ENCODE measurements at regions of chr11 and their contacts with region 1.

Region 1: GRCh38 chr11:61061081-61061826 is 41.0 kb upstream of the CD5 start:
- DNase-seq: peak; percentile 97
- H3K4me3 Mint-ChIP-seq: peak overlapping the region; percentile 70
- H3K27ac Mint-ChIP-seq: peak overlapping the region; percentile 100
- H3K4me1 Mint-ChIP-seq: peaks cover 88% of the 10 kb centered on the region
- H3K27me3 Mint-ChIP-seq: no peaks in the 10 kb centered on the region

Region 2: DNA sequence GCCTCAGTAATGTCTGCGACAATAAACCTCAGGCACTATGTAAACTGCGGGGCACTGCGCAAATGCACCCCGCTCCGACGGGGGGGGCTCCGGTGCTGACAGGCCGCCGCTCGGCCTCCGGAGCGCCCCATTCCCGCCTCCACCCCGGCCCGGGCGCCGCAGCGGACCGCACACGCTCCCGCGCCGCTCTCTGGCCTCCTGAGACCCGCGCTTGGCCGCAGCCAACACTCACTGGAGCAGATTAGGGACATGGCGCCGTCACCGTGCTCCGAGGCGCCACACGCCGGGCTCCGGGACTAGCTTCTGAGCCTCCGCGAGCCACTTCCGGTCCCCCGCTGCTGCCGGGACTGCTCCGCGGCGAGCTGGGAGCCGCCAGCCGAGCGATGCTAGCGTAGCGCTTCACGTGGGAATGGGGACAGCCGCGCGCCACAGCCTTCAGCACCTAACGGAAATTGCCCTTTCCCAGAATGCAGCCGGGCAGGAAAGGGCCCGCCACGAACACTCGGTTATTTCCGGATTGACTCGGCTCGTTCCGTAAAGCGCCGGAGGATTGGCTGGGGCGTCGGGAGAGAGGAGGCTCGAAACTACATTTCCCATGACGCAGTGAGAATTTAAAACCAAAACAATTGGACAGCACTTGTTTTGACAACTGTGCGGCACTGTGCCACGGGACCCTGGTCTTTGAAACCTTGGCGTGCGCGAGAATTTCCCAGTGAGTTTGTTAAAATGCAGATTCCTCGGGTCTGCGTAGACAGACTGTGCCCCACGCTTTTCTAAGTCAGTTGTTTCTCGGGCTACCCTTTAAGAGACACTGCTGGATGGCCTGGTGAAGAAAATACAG is 154.9 kb before region 1 on chr11 and contains the start of gene PRPF19:
- CTCF ChIA-PET with region 1: no interaction called
- intact Hi-C with region 1: loop called (anchors 1 kb)
- DNase-seq: peak; percentile 100
- H3K4me3 Mint-ChIP-seq: peak within 1 kb of the TSS; percentile 80
- H3K27ac Mint-ChIP-seq: peak within 1 kb of the TSS; percentile 92
- H3K4me1 Mint-ChIP-seq: peaks cover 40% of the 10 kb centered on the region
- H3K27me3 Mint-ChIP-seq: no peaks in the 10 kb centered on the region
- total RNA-seq, gene PRPF19: 108 to 119 TPM

Region 3: DNA sequence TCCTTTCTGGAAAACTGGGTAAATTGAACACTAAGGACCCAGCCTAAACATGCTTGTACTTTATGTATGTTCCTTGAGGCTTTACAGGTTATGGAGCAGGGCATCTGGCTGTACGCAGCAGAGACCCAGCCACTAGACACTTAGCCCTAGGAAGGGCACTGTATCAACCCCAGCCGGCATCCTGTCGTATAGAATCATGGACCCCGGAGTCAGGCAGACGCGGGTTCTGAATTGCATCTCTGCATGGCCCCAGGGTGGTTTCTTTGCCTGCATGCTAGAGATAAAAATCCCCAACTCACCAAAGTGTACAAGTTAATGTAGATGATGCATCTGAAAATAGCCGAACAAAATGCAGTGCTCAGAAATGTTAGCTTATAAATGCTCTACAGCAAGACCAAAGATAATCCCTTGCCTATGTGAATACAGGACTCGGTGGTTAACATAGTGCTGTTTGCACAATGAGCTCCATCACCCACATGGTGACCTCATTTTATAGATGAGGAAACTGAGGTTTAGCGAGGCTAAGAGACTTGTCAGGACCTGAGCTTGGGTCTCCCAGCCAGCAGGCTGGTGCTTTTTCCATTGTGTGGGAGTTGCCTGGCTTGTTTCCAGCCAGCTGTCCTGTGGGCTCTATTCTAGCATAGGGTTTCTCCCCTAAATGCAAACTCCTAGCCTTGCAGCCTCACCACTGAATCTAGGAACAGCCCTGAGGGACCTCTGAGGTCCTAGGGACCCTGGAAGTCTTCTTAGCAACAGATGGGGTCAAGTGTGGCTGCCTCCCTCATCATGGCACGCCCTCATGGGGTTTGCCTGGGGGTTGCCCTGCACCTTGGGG is 82.5 kb before region 1 on chr11:
- CTCF ChIA-PET with region 1: no interaction called
- intact Hi-C with region 1: loop called (anchors 2 kb)
- DNase-seq: peak; percentile 92
- H3K4me3 Mint-ChIP-seq: peak overlapping the region; percentile 72
- H3K27ac Mint-ChIP-seq: peak overlapping the region; percentile 97
- H3K4me1 Mint-ChIP-seq: peaks cover 76% of the 10 kb centered on the region
- H3K27me3 Mint-ChIP-seq: no peaks in the 10 kb centered on the region

Region 4: GRCh38 chr11:61004180-61004611 is 57.1 kb before region 1 on chr11:
- CTCF ChIA-PET with region 1: interaction called, 3 read pairs
- intact Hi-C with region 1: loop called (anchors 1 kb)
- DNase-seq: peak; percentile 78
- H3K4me3 Mint-ChIP-seq: peak overlapping the region; percentile 66
- H3K27ac Mint-ChIP-seq: peak overlapping the region; percentile 95
- H3K4me1 Mint-ChIP-seq: peaks cover 91% of the 10 kb centered on the region
- H3K27me3 Mint-ChIP-seq: no peaks in the 10 kb centered on the region

Region 5: DNA sequence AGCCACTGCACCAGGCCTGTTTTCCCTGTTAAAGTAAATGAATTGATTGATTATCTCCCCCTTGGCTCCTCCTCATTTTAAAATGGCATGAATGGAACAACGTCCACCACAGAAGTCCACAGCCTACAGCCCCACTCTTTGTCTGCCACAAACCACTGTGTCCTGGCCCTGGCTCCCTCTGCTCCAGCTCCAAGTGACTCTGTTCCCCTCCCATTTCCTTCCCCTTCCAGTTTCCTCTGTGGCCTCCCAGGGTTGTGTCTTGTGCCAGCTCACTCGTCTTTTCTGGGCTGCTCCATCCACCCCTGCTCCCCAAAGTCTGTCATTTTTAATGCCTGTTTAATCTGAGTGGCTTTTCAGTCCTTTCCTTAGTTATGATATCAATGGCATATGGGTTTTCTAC is 11.4 kb before region 1 on chr11:
- CTCF ChIA-PET with region 1: interaction called, 8 read pairs
- intact Hi-C with region 1: loop called (anchors 1 kb)
- DNase-seq: no peak
- H3K4me3 Mint-ChIP-seq: peak overlapping the region; percentile 8
- H3K27ac Mint-ChIP-seq: peak overlapping the region; percentile 80
- H3K4me1 Mint-ChIP-seq: peaks cover 74% of the 10 kb centered on the region
- H3K27me3 Mint-ChIP-seq: no peaks in the 10 kb centered on the region

Region 6: DNA sequence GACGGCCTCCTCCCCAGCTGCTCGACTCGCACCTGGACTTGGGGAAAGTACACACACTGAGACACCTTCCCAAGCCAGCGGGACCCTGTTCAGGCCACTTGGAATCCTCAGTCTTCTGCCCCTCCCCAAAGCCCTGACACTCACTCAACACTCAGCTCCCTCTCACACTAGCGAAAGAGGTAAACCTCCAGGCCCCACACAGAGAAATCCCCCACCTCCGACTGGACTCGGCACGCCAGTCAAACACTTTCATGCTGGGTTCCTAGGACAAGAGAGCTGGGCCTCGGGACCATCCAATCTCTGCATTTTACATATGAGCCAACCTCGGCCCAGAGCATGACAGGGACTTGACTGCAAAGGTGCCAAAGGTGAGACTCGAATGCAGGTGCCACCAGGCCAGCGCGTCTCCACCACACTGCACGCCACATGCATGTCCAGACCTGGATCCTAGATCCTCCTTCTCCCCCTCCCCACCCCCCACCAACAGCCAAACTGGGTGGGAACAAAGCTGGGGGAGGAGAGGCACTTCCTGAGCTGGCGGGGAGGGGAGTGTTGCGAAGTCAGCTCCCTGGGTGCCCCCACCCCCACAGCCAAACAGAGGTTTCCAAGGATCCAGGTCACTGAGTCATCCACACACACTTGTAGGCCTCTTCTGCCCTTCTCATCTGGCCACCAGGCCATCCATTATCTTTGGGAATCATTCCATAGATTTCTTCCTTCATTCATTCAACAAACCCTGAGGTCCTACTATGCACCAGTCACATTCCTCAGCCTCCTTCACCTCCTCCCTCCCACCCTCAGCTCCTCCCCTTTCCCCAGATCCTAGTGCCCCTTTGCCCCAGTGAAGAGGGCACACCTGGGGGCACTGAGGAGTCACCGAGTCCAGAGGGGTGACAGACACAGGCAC is 30.4 kb after region 1 on chr11:
- CTCF ChIA-PET with region 1: no interaction called
- intact Hi-C with region 1: loop called (anchors 1 kb)
- DNase-seq: peak; percentile 84
- H3K4me3 Mint-ChIP-seq: peak overlapping the region; percentile 92
- H3K27ac Mint-ChIP-seq: peak overlapping the region; percentile 99
- H3K4me1 Mint-ChIP-seq: peaks cover 61% of the 10 kb centered on the region
- H3K27me3 Mint-ChIP-seq: no peaks in the 10 kb centered on the region

Region 7: GRCh38 chr11:61119055-61119454 is 57.8 kb after region 1 on chr11:
- CTCF ChIA-PET with region 1: no interaction called
- intact Hi-C with region 1: loop called (anchors 1 kb)
- DNase-seq: no peak
- H3K4me3 Mint-ChIP-seq: peak overlapping the region; percentile 39
- H3K27ac Mint-ChIP-seq: peak overlapping the region; percentile 67
- H3K4me1 Mint-ChIP-seq: peaks cover 73% of the 10 kb centered on the region
- H3K27me3 Mint-ChIP-seq: no peaks in the 10 kb centered on the region

Measured in activated naive CD4-positive, alpha-beta T cell treated with anti-CD3 and anti-CD28 coated beads for 36 hours (primary cell).